Activated T-helper 2 cell treated with anti-CD3 and anti-CD28 coated beads, Interferon-gamma antibody, Interleukin-2, Interleukin-4, amounts not matched to agents 10 μg/mL and 5 μg/mL and 100 μg/mL, durations not matched to agents 14 hours and 24 hours and 36 hours (primary cell): ENCODE measurements at regions of chr4 and their contacts with region 1.

Region 1: GRCh38 chr4:56907489-56908205 is at the start of gene REST:
- DNase-seq: peak; percentile 78
- H3K4me3 Mint-ChIP-seq: peak within 1 kb of the TSS; percentile 84
- H3K27ac Mint-ChIP-seq: peak within 1 kb of the TSS; percentile 72
- H3K4me1 Mint-ChIP-seq: peaks cover 34% of the 10 kb centered on the region
- H3K27me3 Mint-ChIP-seq: peaks cover 10% of the 10 kb centered on the region
- total RNA-seq, gene REST: 44.5 and 47.7 TPM in 2 replicates

Region 2: GRCh38 chr4:56301181-56302076 is 606.2 kb before region 1 on chr4:
- intact Hi-C with region 1: no loop called
- DNase-seq: peak; percentile 55
- H3K4me3 Mint-ChIP-seq: peak overlapping the region; percentile 15
- H3K27ac Mint-ChIP-seq: no peak overlapping the region
- H3K4me1 Mint-ChIP-seq: peaks cover 12% of the 10 kb centered on the region
- H3K27me3 Mint-ChIP-seq: peaks cover 15% of the 10 kb centered on the region

Region 3: GRCh38 chr4:56892691-56893090 is 15.0 kb before region 1 on chr4:
- intact Hi-C with region 1: loop called (anchors 1 kb)
- DNase-seq: no peak
- H3K4me3 Mint-ChIP-seq: no peak overlapping the region
- H3K27ac Mint-ChIP-seq: no peak overlapping the region
- H3K4me1 Mint-ChIP-seq: no peaks in the 10 kb centered on the region
- H3K27me3 Mint-ChIP-seq: peaks cover 11% of the 10 kb centered on the region

Region 4: DNA sequence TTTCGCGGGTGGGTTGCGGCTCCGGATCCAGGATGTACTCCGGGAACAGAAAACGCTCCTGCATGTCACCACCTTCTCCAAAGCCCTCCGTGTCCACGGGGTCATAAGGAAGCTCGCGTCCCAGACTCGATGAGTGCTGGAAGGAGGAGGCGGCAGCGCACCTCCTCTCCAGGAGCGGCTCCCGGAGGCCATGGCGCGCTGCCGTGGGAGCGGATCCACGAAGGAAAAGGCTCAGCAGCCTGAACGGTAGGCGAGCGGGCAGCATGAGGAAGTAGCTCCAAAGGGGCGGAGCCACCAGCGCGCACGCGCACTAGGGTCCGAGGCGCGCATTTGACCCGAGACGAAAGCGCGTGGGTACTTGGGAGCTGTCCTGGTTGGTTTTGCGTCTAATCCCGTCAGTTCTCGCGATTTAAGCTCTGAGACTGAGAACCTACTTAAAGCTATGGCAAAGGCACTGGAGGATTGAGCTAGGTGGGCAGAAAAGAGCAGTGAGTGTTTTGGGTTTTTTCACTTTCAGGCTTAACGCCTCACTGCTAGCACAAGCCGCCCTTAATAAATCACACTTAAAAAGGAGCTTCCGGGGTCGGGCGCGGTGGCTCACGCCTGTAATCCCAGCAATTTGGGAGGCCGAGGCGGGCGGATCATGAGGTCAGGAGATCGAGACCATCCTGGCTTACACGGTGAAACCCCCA is 69.8 kb after region 1 on chr4 and contains the start of gene NOA1:
- intact Hi-C with region 1: loop called (anchors 1 kb)
- DNase-seq: peak; percentile 98
- H3K4me3 Mint-ChIP-seq: peak within 1 kb of the TSS; percentile 100
- H3K27ac Mint-ChIP-seq: peak within 1 kb of the TSS; percentile 100
- H3K4me1 Mint-ChIP-seq: peaks cover 41% of the 10 kb centered on the region
- H3K27me3 Mint-ChIP-seq: no peaks in the 10 kb centered on the region
- total RNA-seq, gene NOA1: 16.5 and 18.1 TPM in 2 replicates

Region 5: GRCh38 chr4:57018980-57019379 is 111.3 kb after region 1 on chr4:
- intact Hi-C with region 1: no loop called
- DNase-seq: no peak
- H3K4me3 Mint-ChIP-seq: no peak overlapping the region
- H3K27ac Mint-ChIP-seq: no peak overlapping the region
- H3K4me1 Mint-ChIP-seq: peaks cover 6% of the 10 kb centered on the region
- H3K27me3 Mint-ChIP-seq: no peaks in the 10 kb centered on the region

Region 6: GRCh38 chr4:57043347-57044251 is 136.0 kb after region 1 on chr4:
- intact Hi-C with region 1: no loop called
- DNase-seq: no peak
- H3K4me3 Mint-ChIP-seq: no peak overlapping the region
- H3K27ac Mint-ChIP-seq: no peak overlapping the region
- H3K4me1 Mint-ChIP-seq: no peaks in the 10 kb centered on the region
- H3K27me3 Mint-ChIP-seq: peaks cover 5% of the 10 kb centered on the region

Region 7: DNA sequence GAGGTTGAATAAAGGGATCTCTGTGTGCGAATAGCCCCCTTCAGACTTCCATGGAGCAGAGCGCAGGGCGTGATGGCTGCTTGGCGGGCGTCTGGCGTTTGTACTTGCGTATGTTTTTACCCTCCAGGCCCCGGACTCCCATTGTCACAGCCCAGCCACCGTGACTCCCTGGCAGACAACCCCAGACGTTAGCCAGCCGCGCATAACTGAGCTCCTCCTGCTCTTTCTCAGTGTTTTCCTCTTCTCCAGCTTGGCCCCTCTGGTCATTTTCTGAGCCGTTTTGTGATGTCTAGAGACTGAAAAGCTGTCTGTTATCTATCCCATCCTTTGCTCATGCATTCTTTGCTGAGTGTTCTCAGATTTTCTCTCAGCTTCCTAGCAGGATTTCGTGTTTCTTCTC is 148.2 kb after region 1 on chr4:
- intact Hi-C with region 1: no loop called
- DNase-seq: no peak
- H3K4me3 Mint-ChIP-seq: no peak overlapping the region
- H3K27ac Mint-ChIP-seq: no peak overlapping the region
- H3K4me1 Mint-ChIP-seq: no peaks in the 10 kb centered on the region
- H3K27me3 Mint-ChIP-seq: peaks cover 13% of the 10 kb centered on the region